ENCODE measurements at regions of chr2 and their contacts with region 1.

Region 1: GRCh38 chr2:112941753-112942658 is 31.0 kb downstream of the IL37 start:
- DNase-seq: no peak
- H3K4me3 ChIP-seq: no peak overlapping the region
- H3K27me3 ChIP-seq: peaks cover 1% of the 10 kb centered on the region; the same call in 1 of the 2 replicates
- CTCF ChIP-seq: peak; percentile 98

Region 2: GRCh38 chr2:112726497-112727190 is 215.4 kb before region 1 on chr2:
- CTCF ChIA-PET with region 1: interaction called, 26 read pairs
- POLR2A ChIA-PET with region 1: no interaction called
- DNase-seq: no peak
- H3K4me3 ChIP-seq: no peak overlapping the region
- H3K27me3 ChIP-seq: no peaks in the 10 kb centered on the region
- CTCF ChIP-seq: peak; percentile 98

Region 3: DNA sequence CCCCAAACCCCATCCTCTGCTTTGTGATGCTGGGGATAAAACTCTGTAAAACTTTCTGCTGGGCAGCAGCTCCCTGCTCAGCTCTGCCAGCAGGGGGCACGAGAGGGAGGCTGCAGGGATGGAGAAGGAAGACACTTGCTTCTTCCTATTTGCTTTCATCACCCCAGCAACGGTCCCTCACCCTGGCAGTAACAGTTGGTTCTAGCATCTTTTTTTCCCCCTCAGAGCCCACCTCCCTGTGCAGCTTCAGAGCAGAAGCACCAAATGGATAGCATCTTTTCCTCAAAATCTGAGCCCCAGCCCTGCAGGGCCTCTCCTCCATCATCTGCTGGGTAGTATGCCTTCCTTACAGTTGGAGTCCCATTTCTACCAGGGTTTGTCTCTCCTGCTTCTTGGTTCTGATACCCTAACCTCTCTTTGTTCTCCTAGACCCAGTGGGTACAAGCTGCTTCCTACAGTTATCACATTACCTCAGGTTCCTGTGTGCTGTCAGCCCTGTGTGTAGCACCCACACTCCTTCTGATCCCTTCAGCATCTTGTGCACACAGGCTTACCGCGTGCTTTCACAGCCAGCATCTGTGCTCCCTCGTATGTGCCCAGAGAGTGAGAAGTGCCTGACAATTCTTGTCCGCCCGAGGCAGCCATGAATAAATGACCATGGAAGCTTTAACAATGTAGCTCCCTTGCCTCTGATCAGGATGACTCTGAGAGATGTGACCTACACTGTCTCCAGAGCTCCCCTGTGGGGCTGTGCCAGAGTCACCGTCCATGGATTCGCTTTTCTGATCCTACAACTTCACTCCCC is 192.0 kb before region 1 on chr2:
- CTCF ChIA-PET with region 1: interaction called, 190 read pairs
- POLR2A ChIA-PET with region 1: no interaction called
- DNase-seq: no peak
- H3K4me3 ChIP-seq: no peak overlapping the region; the same call in 1 of the 2 replicates
- H3K27me3 ChIP-seq: no peaks in the 10 kb centered on the region
- CTCF ChIP-seq: peak; percentile 99

Region 4: GRCh38 chr2:112811841-112812306 is 130.1 kb before region 1 on chr2:
- CTCF ChIA-PET with region 1: interaction called, 10 read pairs
- POLR2A ChIA-PET with region 1: no interaction called
- DNase-seq: peak; percentile 39
- H3K4me3 ChIP-seq: no peak overlapping the region
- H3K27me3 ChIP-seq: no peaks in the 10 kb centered on the region
- CTCF ChIP-seq: no peak

Region 5: GRCh38 chr2:112906276-112906675 is 35.7 kb before region 1 on chr2:
- CTCF ChIA-PET with region 1: interaction called, 31 read pairs
- POLR2A ChIA-PET with region 1: no interaction called
- DNase-seq: no peak
- H3K4me3 ChIP-seq: no peak overlapping the region
- H3K27me3 ChIP-seq: peaks cover 1% of the 10 kb centered on the region; the same call in 1 of the 2 replicates
- CTCF ChIP-seq: no peak

Region 6: DNA sequence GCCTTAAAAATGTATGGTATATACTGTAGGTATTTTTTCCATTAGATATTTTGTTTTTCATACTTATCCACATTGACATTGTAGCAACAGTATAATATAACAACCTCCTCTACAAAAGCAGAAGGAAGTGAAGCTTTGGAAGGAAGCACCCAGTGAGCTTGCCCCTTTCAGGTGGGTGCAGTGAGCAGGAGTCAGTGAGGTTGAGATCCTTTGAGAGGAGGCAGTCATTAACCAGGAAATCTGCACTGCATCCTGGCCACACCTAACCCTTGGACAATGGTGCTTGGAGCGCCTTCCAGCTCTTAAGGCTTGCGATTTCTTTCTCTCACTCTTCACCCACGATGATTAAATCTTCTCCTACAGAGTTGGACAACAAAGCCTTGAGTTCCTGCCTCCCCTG is 17.2 kb before region 1 on chr2:
- CTCF ChIA-PET with region 1: interaction called, 36 read pairs
- POLR2A ChIA-PET with region 1: no interaction called
- DNase-seq: no peak
- H3K4me3 ChIP-seq: no peak overlapping the region
- H3K27me3 ChIP-seq: peaks cover 6% of the 10 kb centered on the region
- CTCF ChIP-seq: no peak

Measured in BJ (cell line).